H1 (cell line): ENCODE measurements at regions of chr3 and their contacts with region 1.

Region 1: DNA sequence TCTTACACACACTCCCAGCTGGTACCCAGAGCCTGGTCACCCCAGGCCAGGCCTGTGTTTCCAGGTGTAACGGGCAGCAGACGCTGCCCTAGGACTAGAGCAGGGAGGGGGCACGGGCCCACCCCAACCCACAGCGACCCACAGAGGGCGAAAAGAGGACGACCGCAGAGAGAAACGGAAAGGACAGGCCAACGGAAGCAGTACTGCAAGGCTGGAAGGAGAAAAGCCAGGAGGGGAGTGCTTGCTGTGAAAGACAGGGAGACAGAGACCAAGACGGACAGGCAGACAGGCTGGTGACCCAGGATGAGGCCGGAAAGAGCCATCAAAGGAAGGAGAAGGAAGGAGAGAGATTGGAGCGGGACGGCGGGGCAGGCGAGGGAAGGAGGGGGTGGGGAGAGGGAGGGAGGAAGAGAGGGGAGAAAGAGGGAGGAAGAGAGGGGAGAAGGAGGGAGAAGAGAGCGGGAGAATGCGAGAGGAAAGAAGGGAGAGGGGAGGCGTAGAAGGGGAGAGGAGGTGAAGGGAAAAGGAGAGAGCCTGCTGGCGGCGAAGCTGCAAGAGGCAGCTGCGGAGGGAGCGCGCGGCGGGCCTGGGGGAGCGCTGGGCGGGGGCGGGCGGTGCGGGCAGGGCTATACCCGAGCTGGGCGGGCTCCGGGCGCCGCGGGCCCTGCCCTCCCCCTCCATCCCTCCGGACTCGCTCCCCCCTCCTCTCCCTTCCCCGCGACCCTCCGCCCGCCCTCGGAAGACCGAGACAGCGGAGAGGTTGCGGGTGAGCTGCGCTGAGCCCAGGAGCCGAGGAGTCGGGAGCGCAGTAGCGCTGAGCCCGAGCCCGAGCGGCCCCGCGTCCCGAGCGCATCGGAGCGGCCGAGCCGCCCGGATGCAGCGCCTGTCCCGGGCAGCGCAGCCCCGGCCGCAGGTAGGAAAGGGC is at the start of gene SLC6A1:
- DNase-seq: peak in 1 of 2 experiments; percentile 83
- H3K4me3 ChIP-seq: peak within 1 kb of the TSS; percentile 66 to 86 (median 75)
- H3K27ac ChIP-seq: no peak within 1 kb of the TSS
- H3K4me1 ChIP-seq: peaks cover 0 to 11% (median 5%) of the 10 kb centered on the region in 4 experiments; a peak in 5 of 7 replicates
- H3K27me3 ChIP-seq: peaks cover 20 to 41% (median 39%) of the 10 kb centered on the region in 4 experiments
- CTCF ChIP-seq: peak; percentile 62 to 71 (median 71)
- EP300 ChIP-seq: no peak
- POLR2A ChIP-seq: no peak
- RAD21 ChIP-seq: peak; percentile 50 to 63; a peak in 3 of 4 replicates
- total RNA-seq, gene SLC6A1: 0.30 and 0.31 TPM in 2 replicates

Region 2: GRCh38 chr3:10977892-10978510 is 14.3 kb before region 1 on chr3:
- CTCF ChIA-PET with region 1: interaction called, 13 read pairs
- POLR2A ChIA-PET with region 1: interaction called, 5 read pairs
- DNase-seq: peak in 1 of 2 experiments; percentile 55
- H3K4me3 ChIP-seq: no peak overlapping the region
- H3K27ac ChIP-seq: no peak overlapping the region
- H3K4me1 ChIP-seq: peaks cover 4 to 12% (median 5%) of the 10 kb centered on the region in 4 experiments; a peak in 6 of 7 replicates
- H3K27me3 ChIP-seq: no peaks in the 10 kb centered on the region; a peak in 3 of 7 replicates
- CTCF ChIP-seq: no peak
- EP300 ChIP-seq: no peak
- POLR2A ChIP-seq: no peak
- RAD21 ChIP-seq: no peak